Activated CD8-positive, alpha-beta T cell treated with anti-CD3 and anti-CD28 coated beads for 36 hours (primary cell): ENCODE measurements at regions of chr14 and their contacts with region 1.

Region 1: GRCh38 chr14:105351920-105352851 is 37.6 kb downstream of the PACS2 start:
- DNase-seq: peak; percentile 94
- ATAC-seq: peak; percentile 100
- H3K4me3 Mint-ChIP-seq: no peak overlapping the region
- H3K27ac Mint-ChIP-seq: no peak overlapping the region
- H3K4me1 Mint-ChIP-seq: peaks cover 2% of the 10 kb centered on the region
- H3K27me3 Mint-ChIP-seq: no peaks in the 10 kb centered on the region
- CTCF ChIP-seq: peak; percentile 75

Region 2: GRCh38 chr14:105193916-105194782 is 158.0 kb before region 1 on chr14:
- CTCF ChIA-PET with region 1: interaction called, 10 read pairs
- POLR2A ChIA-PET with region 1: no interaction called
- intact Hi-C with region 1: no loop called
- DNase-seq: peak; percentile 83
- ATAC-seq: peak; percentile 63
- H3K4me3 Mint-ChIP-seq: no peak overlapping the region
- H3K27ac Mint-ChIP-seq: no peak overlapping the region
- H3K4me1 Mint-ChIP-seq: peaks cover 28% of the 10 kb centered on the region
- H3K27me3 Mint-ChIP-seq: peaks cover 18% of the 10 kb centered on the region
- CTCF ChIP-seq: no peak

Region 3: DNA sequence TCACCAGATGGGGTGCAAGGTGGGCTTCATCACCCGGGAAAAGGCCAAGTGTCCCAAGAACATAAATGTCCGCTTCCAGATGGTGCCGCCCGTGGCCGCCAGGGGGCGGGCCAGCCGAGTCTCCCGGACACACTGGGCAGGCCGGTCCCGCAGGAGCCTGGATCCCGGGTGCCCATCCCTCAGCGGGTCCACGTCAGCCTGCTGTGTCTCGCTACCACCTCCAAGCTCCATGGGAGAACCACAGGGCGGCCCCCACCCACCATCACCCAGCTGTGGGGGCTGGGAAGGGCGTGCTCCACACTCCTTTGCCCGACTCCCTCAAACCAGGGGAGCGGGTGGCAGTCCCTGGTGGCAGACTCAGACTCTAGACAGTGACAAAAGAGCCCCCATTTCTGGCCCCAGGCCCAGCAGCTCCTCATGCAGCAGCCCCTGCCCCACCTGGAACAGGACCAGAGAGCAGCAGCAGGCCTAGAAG is 149.1 kb before region 1 on chr14:
- CTCF ChIA-PET with region 1: interaction called, 10 read pairs
- POLR2A ChIA-PET with region 1: no interaction called
- intact Hi-C with region 1: loop called (anchors 5 kb)
- DNase-seq: peak; percentile 75
- ATAC-seq: peak; percentile 41
- H3K4me3 Mint-ChIP-seq: no peak overlapping the region
- H3K27ac Mint-ChIP-seq: no peak overlapping the region
- H3K4me1 Mint-ChIP-seq: peaks cover 16% of the 10 kb centered on the region
- H3K27me3 Mint-ChIP-seq: peaks cover 15% of the 10 kb centered on the region
- CTCF ChIP-seq: peak; percentile 99

Region 4: GRCh38 chr14:105340821-105341733 is 11.1 kb before region 1 on chr14:
- CTCF ChIA-PET with region 1: interaction called, 17 read pairs
- POLR2A ChIA-PET with region 1: no interaction called
- intact Hi-C with region 1: no loop called
- DNase-seq: no peak
- ATAC-seq: peak; percentile 27
- H3K4me3 Mint-ChIP-seq: no peak overlapping the region
- H3K27ac Mint-ChIP-seq: no peak overlapping the region
- H3K4me1 Mint-ChIP-seq: peaks cover 9% of the 10 kb centered on the region
- H3K27me3 Mint-ChIP-seq: no peaks in the 10 kb centered on the region
- CTCF ChIP-seq: no peak